Aorta (tissue), 5 donors: ENCODE measurements at regions of chr1 and their contacts with region 1.

Region 1: GRCh38 chr1:10679496-10680220 is 116.8 kb downstream of the CASZ1 start:
- DNase-seq: no peak
- ATAC-seq: no peak
- H3K4me3 ChIP-seq: no peak overlapping the region
- H3K27ac ChIP-seq: no peak overlapping the region
- H3K4me1 ChIP-seq: no peaks in the 10 kb centered on the region
- H3K27me3 ChIP-seq: no peaks in the 10 kb centered on the region

Region 2: DNA sequence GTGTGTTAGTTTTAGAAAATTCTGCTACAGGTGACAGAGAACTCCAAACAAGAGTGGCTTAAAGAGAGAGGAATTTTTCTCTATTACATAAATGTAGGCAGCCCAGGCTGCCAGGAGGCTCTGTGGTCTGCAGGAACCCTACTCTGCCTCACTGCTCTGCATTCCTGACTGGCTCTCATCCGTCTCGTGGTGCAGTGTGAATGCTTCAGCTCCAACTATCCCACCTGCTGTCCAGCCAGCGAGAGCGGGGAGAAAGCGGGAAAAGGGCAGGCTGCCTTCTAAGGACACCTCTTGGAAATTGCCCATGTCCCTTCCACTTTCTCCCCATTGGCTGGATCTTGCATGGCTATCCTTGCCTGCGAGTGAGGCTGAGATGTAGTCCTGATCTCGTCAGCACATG is 73.6 kb before region 1 on chr1:
- intact Hi-C with region 1: no loop called
- DNase-seq: no peak
- ATAC-seq: no peak
- H3K4me3 ChIP-seq: no peak overlapping the region
- H3K27ac ChIP-seq: no peak overlapping the region
- H3K4me1 ChIP-seq: no peaks in the 10 kb centered on the region
- H3K27me3 ChIP-seq: no peaks in the 10 kb centered on the region

Region 3: GRCh38 chr1:10620776-10621175 is 58.9 kb before region 1 on chr1:
- intact Hi-C with region 1: no loop called
- DNase-seq: peak in 1 of 2 donors; percentile 52
- ATAC-seq: no peak
- H3K4me3 ChIP-seq: no peak overlapping the region
- H3K27ac ChIP-seq: no peak overlapping the region
- H3K4me1 ChIP-seq: no peaks in the 10 kb centered on the region
- H3K27me3 ChIP-seq: no peaks in the 10 kb centered on the region

Region 4: DNA sequence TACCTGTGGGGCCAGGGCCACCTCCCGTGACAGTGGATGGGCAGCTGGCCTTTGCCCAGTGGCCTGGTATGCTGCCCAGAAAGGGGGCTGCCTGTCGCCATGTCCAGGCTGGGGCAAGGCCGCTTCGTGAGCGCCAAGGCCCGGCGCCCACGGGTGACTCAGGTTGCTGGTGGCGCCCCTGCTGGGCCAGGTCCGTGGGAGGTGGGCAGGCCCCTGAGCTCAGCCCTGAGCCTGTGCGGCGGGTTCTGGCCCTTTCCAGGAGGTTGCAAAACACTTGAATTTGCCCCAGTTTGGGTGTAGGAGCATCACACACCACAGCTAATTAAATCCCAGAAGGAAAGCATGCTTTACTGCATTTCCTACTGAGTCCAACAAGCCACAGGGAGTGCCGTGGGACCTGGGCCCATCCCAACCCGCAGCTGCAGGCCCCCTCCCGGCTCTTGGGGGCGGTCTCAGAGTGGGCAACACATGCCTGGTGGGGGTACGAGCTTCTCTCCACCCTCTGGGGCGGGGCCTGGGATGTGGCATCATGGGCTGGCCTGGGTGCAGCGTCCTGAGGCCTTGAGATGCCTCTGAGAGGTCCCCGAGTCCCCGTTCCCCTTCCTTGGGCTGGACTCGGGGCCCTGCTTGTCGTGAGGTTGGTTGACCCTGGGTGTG is 45.1 kb before region 1 on chr1:
- intact Hi-C with region 1: loop called in 1 of 2 experiments (anchors 5 kb)
- DNase-seq: peak in 1 of 2 donors; percentile 70
- ATAC-seq: peak; percentile 56
- H3K4me3 ChIP-seq: no peak overlapping the region
- H3K27ac ChIP-seq: peak overlapping the region; percentile 47 to 81
- H3K4me1 ChIP-seq: no peaks in the 10 kb centered on the region
- H3K27me3 ChIP-seq: no peaks in the 10 kb centered on the region

Region 5: GRCh38 chr1:10796019-10796944 is 116.6 kb after region 1 on chr1 and contains the start of gene CASZ1:
- intact Hi-C with region 1: loop called in 1 of 2 experiments (anchors 2 kb)
- DNase-seq: peak; percentile 78 to 91
- ATAC-seq: peak; percentile 91
- H3K4me3 ChIP-seq: peak within 1 kb of the TSS; percentile 55 to 84
- H3K27ac ChIP-seq: no peak within 1 kb of the TSS
- H3K4me1 ChIP-seq: no peaks in the 10 kb centered on the region
- H3K27me3 ChIP-seq: no peaks in the 10 kb centered on the region
- total RNA-seq, gene CASZ1: 20.6 to 39.0 TPM